ENCODE measurements at regions of chr17 and their contacts with region 1.

Region 1: GRCh38 chr17:18033442-18034099 is 5.4 kb downstream of the ATPAF2 start:
- DNase-seq: peak; percentile 57
- H3K4me3 Mint-ChIP-seq: no peak overlapping the region
- H3K27ac Mint-ChIP-seq: peak overlapping the region; percentile 21
- H3K4me1 Mint-ChIP-seq: peaks cover 38% of the 10 kb centered on the region
- H3K27me3 Mint-ChIP-seq: no peaks in the 10 kb centered on the region

Region 2: DNA sequence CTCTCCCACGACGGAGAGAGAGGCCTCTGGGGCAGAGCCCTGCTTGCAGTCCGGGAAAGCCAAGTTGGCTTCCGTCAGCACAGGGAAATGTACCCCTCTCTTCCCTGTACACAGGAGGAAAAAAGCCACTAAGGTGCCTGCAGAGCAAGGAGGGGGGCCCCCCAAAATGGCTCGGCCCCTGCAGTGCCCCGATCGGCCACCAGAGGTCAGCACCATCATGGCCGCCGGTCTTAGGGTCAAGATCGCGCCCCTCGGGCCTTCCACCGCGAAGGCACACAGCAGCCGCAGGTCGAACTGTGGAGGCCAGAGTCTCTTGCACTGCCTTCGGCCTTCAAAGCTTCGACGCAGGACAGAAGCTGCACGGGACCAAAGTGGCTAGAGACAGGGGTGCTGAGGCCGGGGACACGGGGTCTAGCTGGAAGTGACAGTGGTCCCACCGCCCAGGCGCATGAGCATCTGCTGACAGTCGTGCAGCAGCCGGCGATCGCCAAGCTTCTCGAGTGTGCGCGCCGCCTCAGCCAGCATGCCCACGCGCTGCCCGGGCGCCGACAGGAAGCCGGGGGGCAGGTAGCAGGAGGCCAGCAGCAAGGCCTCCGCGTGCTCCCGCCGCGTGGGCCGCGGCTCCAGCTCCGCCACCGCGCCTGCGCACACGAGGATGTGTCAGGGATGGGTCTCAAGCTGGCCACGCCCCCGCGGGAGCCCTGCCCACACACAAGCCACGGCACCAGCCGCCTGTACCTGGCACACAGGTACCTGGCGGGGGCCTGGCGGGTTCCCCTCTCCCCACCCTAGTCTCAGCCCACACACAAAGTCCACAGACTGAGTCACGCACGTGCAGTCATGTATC is 221.1 kb before region 1 on chr17:
- intact Hi-C with region 1: loop called (anchors 5 kb)
- DNase-seq: peak; percentile 40
- H3K4me3 Mint-ChIP-seq: no peak overlapping the region
- H3K27ac Mint-ChIP-seq: no peak overlapping the region
- H3K4me1 Mint-ChIP-seq: peaks cover 5% of the 10 kb centered on the region
- H3K27me3 Mint-ChIP-seq: no peaks in the 10 kb centered on the region

Region 3: GRCh38 chr17:17890773-17891759 is 142.5 kb before region 1 on chr17:
- intact Hi-C with region 1: loop called (anchors 1 kb)
- DNase-seq: peak; percentile 25
- H3K4me3 Mint-ChIP-seq: no peak overlapping the region
- H3K27ac Mint-ChIP-seq: no peak overlapping the region
- H3K4me1 Mint-ChIP-seq: peaks cover 8% of the 10 kb centered on the region
- H3K27me3 Mint-ChIP-seq: no peaks in the 10 kb centered on the region

Region 4: GRCh38 chr17:17994271-17995069 is 39.1 kb before region 1 on chr17:
- intact Hi-C with region 1: loop called (anchors 1 kb)
- DNase-seq: no peak
- H3K4me3 Mint-ChIP-seq: no peak overlapping the region
- H3K27ac Mint-ChIP-seq: no peak overlapping the region
- H3K4me1 Mint-ChIP-seq: no peaks in the 10 kb centered on the region
- H3K27me3 Mint-ChIP-seq: no peaks in the 10 kb centered on the region

Region 5: GRCh38 chr17:18017958-18018357 is 15.6 kb before region 1 on chr17:
- intact Hi-C with region 1: no loop called
- DNase-seq: no peak
- H3K4me3 Mint-ChIP-seq: no peak overlapping the region
- H3K27ac Mint-ChIP-seq: peak overlapping the region; percentile 27
- H3K4me1 Mint-ChIP-seq: no peaks in the 10 kb centered on the region
- H3K27me3 Mint-ChIP-seq: no peaks in the 10 kb centered on the region

Region 6: GRCh38 chr17:18257982-18258355 is 224.4 kb after region 1 on chr17:
- intact Hi-C with region 1: no loop called
- DNase-seq: peak; percentile 37
- H3K4me3 Mint-ChIP-seq: peak overlapping the region; percentile 99
- H3K27ac Mint-ChIP-seq: peak overlapping the region; percentile 89
- H3K4me1 Mint-ChIP-seq: peaks cover 31% of the 10 kb centered on the region
- H3K27me3 Mint-ChIP-seq: no peaks in the 10 kb centered on the region